ENCODE measurements at regions of chr1 and their contacts with region 1.

Region 1: DNA sequence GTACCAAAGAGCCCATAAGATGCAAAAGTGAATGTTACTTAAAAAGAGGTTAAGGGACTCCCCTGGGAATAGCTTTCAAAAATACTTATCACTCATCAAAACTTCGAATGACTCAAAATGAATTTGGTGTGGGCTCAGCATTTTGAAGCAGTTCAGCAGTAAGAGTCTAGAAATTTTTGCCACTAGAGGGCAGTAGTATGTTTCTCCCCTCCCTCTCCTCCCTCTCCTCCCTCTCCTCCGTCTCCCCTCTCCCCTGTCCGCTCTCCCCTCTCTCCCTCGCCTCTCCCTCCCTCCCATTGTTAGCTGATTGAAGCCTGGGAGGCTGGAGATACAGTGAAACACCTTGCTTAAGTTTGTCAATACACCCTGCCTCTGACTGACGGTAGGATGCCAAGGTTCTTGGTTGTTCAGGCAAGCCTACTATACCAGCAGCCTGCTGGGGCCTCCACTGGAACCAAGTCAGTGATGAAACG is 70.8 kb upstream of the TENT5C start:
- DNase-seq: peak; percentile 84
- ATAC-seq: peak; percentile 85
- H3K4me3 ChIP-seq: no peak overlapping the region
- H3K4me3 Mint-ChIP-seq: peak overlapping the region; percentile 27
- H3K27ac ChIP-seq: no peak overlapping the region
- H3K27ac Mint-ChIP-seq: peak overlapping the region; percentile 54
- H3K4me1 ChIP-seq: peaks cover 28 to 36% of the 10 kb centered on the region in 2 donors
- H3K4me1 Mint-ChIP-seq: peaks cover 2% of the 10 kb centered on the region
- H3K27me3 ChIP-seq: no peaks in the 10 kb centered on the region
- H3K27me3 Mint-ChIP-seq: no peaks in the 10 kb centered on the region
- CTCF ChIP-seq: peak; percentile 77

Region 2: DNA sequence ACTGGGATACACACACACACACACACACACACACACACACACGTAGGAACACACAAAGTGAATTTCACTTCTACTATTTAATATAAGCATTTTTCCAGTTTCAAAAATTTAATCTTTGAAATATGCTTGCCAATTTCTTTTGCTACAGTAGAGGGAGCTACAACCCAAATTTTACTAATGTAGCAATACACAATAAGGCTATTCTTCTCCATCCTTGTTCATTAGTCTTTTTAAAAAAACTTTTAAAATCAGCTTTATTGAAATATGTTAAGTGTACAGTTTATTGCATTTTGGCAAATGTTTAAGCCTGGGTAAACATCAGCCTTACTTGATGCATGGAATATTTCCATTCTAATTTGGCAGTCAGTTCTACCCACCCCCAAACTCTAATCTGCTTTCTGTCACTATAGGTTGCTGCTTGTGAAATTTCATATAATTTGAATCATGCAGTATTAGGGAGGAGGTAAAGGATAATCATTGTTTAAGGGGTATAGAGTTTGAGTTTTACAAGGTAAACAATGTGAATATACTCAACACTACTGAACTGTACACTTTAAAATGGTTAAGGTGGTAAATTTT is 22.2 kb before region 1 on chr1:
- CTCF ChIA-PET with region 1: interaction called, 64 read pairs
- POLR2A ChIA-PET with region 1: no interaction called
- intact Hi-C with region 1: loop called (anchors 2 kb)
- DNase-seq: peak; percentile 52
- ATAC-seq: peak; percentile 51
- H3K4me3 ChIP-seq: no peak overlapping the region
- H3K4me3 Mint-ChIP-seq: no peak overlapping the region
- H3K27ac ChIP-seq: no peak overlapping the region
- H3K27ac Mint-ChIP-seq: no peak overlapping the region
- H3K4me1 ChIP-seq: no peaks in the 10 kb centered on the region
- H3K4me1 Mint-ChIP-seq: peaks cover 5% of the 10 kb centered on the region
- H3K27me3 ChIP-seq: no peaks in the 10 kb centered on the region
- H3K27me3 Mint-ChIP-seq: no peaks in the 10 kb centered on the region
- CTCF ChIP-seq: peak; percentile 82

Region 3: GRCh38 chr1:117568999-117569398 is 34.0 kb after region 1 on chr1:
- CTCF ChIA-PET with region 1: interaction called, 11 read pairs
- POLR2A ChIA-PET with region 1: no interaction called
- intact Hi-C with region 1: no loop called
- DNase-seq: no peak
- ATAC-seq: no peak
- H3K4me3 ChIP-seq: no peak overlapping the region
- H3K4me3 Mint-ChIP-seq: no peak overlapping the region
- H3K27ac ChIP-seq: no peak overlapping the region
- H3K27ac Mint-ChIP-seq: no peak overlapping the region
- H3K4me1 ChIP-seq: peaks cover 20 to 27% of the 10 kb centered on the region in 2 donors
- H3K4me1 Mint-ChIP-seq: peaks cover 31% of the 10 kb centered on the region
- H3K27me3 ChIP-seq: no peaks in the 10 kb centered on the region
- H3K27me3 Mint-ChIP-seq: peaks cover 4% of the 10 kb centered on the region
- CTCF ChIP-seq: no peak

Region 4: DNA sequence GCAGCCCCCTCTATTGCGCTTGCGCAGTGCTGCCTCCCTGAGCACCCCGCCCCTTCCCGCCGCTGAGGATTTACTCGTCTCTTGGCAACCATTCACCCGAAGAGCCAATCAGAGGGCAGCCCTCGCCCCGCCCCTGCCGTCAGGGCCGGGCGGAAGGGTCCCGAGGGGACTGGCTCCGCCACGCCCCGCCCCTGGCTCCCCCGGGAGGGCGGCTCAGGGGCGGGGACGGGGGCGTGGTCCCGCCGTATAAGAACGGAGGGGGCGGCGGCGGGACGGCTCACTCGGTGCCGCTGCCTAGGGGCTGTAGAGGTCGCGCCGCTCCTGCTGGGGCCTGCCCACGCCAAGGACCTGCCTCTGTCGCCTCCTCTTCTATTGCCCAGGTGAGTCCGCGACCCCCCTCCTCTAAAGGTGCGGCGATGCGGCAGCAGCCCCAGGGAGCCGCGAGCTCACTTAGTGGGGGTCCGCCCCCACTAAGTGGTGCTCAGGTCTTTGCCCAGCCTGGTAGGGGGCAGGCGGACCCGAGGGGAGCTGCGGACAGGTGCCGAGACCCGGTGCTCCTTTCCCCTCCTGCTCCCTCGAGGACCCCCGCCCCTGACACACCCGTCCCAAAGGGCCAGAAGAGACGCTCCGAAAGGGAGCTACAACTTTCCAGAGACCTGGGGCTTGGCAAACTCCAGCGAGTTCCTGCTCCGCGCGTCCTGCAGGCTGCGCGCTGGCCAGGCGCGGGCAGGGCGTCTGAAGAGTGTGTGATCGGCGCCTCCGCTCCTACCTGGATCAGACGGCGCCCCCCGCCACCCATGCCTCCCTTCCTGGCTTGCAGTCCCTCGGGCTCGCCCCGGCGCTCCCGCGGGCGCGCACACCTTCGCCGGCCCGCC is 71.0 kb after region 1 on chr1 and contains the start of gene TENT5C:
- CTCF ChIA-PET with region 1: interaction called, 38 read pairs
- POLR2A ChIA-PET with region 1: interaction called, 7 read pairs
- intact Hi-C with region 1: loop called (anchors 1 kb)
- DNase-seq: peak; percentile 99
- ATAC-seq: peak; percentile 88
- H3K4me3 ChIP-seq: peak within 1 kb of the TSS; percentile 95 to 99 (median 97)
- H3K4me3 Mint-ChIP-seq: peak within 1 kb of the TSS; percentile 99
- H3K27ac ChIP-seq: peak within 1 kb of the TSS; percentile 88 to 96
- H3K27ac Mint-ChIP-seq: peak within 1 kb of the TSS; percentile 96
- H3K4me1 ChIP-seq: peaks cover 38 to 49% of the 10 kb centered on the region in 2 donors
- H3K4me1 Mint-ChIP-seq: peaks cover 52% of the 10 kb centered on the region
- H3K27me3 ChIP-seq: peaks cover 0 to 1% (median 0%) of the 10 kb centered on the region in 4 experiments
- H3K27me3 Mint-ChIP-seq: no peaks in the 10 kb centered on the region
- CTCF ChIP-seq: no peak
- total RNA-seq, gene TENT5C: 112 TPM in 2 replicates

Region 5: DNA sequence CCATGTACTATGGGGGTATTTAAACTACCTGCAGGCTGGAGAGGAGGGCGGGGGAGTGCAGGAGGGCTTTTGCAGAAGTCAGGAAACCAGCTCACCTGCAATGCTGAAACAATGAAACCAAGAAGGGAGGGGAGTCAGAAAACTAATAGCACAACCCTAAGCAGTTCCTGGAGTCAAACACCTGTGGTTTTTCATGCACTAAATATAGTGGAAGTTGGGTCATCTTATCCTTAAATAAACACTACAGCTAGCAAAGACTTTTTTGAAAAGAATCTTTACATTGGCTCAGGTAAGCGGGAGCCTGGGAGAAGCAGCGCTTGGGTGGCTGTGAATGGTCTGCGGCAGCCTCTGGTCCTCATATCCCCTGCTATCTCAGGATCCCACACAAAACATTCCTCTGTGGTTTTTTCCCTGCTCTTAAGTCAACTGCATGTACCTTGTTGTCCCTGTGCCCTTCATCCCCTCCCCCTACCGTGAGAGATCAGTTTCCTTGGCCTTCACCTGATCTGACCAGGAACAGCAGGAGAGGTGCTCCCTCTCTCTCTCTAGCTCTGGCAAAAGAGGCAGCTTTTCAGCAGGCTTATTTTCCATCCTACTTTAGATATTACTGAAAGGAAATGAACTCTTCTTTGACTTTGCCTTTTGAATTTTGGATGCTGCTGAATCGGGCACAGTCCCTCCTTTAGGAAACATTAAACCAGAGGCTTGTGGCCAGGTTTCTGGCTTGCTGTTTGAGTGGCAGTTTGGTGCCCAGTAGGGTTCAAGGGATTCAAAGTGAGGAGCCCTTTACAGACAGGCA is 97.4 kb after region 1 on chr1:
- CTCF ChIA-PET with region 1: interaction called, 88 read pairs
- POLR2A ChIA-PET with region 1: no interaction called
- intact Hi-C with region 1: no loop called
- DNase-seq: no peak
- ATAC-seq: no peak
- H3K4me3 ChIP-seq: no peak overlapping the region
- H3K4me3 Mint-ChIP-seq: peak overlapping the region; percentile 23
- H3K27ac ChIP-seq: no peak overlapping the region
- H3K27ac Mint-ChIP-seq: peak overlapping the region; percentile 52
- H3K4me1 ChIP-seq: peaks cover 87 to 89% of the 10 kb centered on the region in 2 donors
- H3K4me1 Mint-ChIP-seq: peaks cover 97% of the 10 kb centered on the region
- H3K27me3 ChIP-seq: no peaks in the 10 kb centered on the region
- H3K27me3 Mint-ChIP-seq: no peaks in the 10 kb centered on the region
- CTCF ChIP-seq: no peak

Region 6: DNA sequence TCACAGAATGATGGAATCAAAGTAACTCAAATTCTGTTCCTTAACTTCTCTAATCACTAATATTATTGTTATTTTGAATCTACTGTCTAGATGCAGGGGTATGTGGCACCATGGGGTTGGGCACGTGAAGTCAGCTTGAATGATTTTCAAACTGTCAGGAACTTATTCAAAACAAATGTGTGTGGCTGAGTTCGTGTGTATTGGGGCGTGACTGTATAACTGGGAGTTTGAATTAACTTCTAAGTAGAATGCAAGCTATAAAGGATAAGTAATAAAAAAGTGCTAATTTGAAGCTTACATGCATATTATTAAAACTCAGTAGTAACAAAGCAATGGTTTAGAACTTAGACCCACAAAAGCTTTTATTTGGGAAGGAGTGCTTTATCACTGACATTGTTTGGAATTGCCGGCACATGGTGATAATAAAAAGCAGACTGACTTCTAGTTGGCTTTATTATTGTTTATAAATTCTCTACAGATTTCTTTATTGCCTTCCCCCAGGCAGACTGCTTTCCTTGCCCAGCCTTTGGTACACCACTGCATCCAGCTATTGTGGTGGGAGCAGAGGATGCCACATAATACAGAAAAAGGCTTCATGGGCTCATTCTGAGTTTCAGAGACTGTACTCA is 155.1 kb after region 1 on chr1:
- CTCF ChIA-PET with region 1: interaction called, 12 read pairs
- POLR2A ChIA-PET with region 1: no interaction called
- intact Hi-C with region 1: no loop called
- DNase-seq: no peak
- ATAC-seq: no peak
- H3K4me3 ChIP-seq: no peak overlapping the region
- H3K4me3 Mint-ChIP-seq: no peak overlapping the region
- H3K27ac ChIP-seq: no peak overlapping the region
- H3K27ac Mint-ChIP-seq: no peak overlapping the region
- H3K4me1 ChIP-seq: peaks cover 0 to 3% of the 10 kb centered on the region in 2 donors
- H3K4me1 Mint-ChIP-seq: peaks cover 2% of the 10 kb centered on the region
- H3K27me3 ChIP-seq: peaks cover 0 to 5% (median 0%) of the 10 kb centered on the region in 4 experiments
- H3K27me3 Mint-ChIP-seq: peaks cover 8% of the 10 kb centered on the region
- CTCF ChIP-seq: no peak

Region 7: DNA sequence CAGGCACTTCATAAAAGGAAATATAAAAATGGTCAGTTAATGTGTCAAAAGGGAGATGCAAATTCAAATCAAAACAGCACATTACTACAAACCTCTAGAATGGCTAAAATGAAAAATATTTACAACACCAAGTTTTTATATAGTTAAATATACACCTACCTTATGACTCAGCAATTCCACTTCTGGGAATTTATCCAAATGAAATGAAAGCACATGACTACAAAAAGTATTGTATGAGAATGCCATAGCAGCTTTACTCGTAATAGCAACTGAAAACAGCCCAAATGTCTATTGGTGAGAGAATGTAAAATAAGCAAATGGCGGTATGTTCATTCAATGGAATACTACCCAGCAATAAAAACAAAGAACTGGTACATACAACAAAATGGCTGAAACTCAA is 825.8 kb after region 1 on chr1:
- CTCF ChIA-PET with region 1: no interaction called
- POLR2A ChIA-PET with region 1: no interaction called
- intact Hi-C with region 1: no loop called
- DNase-seq: no peak
- ATAC-seq: no peak
- H3K4me3 ChIP-seq: no peak overlapping the region
- H3K4me3 Mint-ChIP-seq: no peak overlapping the region
- H3K27ac ChIP-seq: no peak overlapping the region
- H3K27ac Mint-ChIP-seq: no peak overlapping the region
- H3K4me1 ChIP-seq: no peaks in the 10 kb centered on the region
- H3K4me1 Mint-ChIP-seq: no peaks in the 10 kb centered on the region
- H3K27me3 ChIP-seq: no peaks in the 10 kb centered on the region
- H3K27me3 Mint-ChIP-seq: no peaks in the 10 kb centered on the region
- CTCF ChIP-seq: no peak